ENCODE measurements at regions of chr15 and their contacts with region 1.

Region 1: GRCh38 chr15:35519541-35520149 is 26.3 kb downstream of the DPH6 start:
- DNase-seq: no peak
- H3K4me3 ChIP-seq: no peak overlapping the region
- H3K27ac ChIP-seq: no peak overlapping the region
- H3K4me1 ChIP-seq: no peaks in the 10 kb centered on the region
- H3K27me3 ChIP-seq: no peaks in the 10 kb centered on the region
- CTCF ChIP-seq: peak in 2 of 3 experiments; percentile 14 to 55
- POLR2A ChIP-seq: no peak

Region 2: GRCh38 chr15:36696196-36696595 is 1176.6 kb after region 1 on chr15:
- intact Hi-C with region 1: loop called (anchors 10 kb)
- DNase-seq: no peak
- H3K4me3 ChIP-seq: no peak overlapping the region
- H3K27ac ChIP-seq: no peak overlapping the region
- H3K4me1 ChIP-seq: no peaks in the 10 kb centered on the region
- H3K27me3 ChIP-seq: no peaks in the 10 kb centered on the region
- CTCF ChIP-seq: no peak
- POLR2A ChIP-seq: no peak